ENCODE measurements at regions of chr19 and their contacts with region 1.

Region 1: GRCh38 chr19:47035127-47036096 is 13.0 kb downstream of the TMEM160 start:
- DNase-seq: no peak
- H3K4me3 ChIP-seq: peak overlapping the region; percentile 57
- CTCF ChIP-seq: peak; percentile 98

Region 2: GRCh38 chr19:47013041-47013517 is 22.3 kb before region 1 on chr19:
- CTCF ChIA-PET with region 1: interaction called, 31 read pairs
- POLR2A ChIA-PET with region 1: interaction called, 4 read pairs
- DNase-seq: no peak
- H3K4me3 ChIP-seq: no peak overlapping the region
- CTCF ChIP-seq: peak; percentile 97

Region 3: DNA sequence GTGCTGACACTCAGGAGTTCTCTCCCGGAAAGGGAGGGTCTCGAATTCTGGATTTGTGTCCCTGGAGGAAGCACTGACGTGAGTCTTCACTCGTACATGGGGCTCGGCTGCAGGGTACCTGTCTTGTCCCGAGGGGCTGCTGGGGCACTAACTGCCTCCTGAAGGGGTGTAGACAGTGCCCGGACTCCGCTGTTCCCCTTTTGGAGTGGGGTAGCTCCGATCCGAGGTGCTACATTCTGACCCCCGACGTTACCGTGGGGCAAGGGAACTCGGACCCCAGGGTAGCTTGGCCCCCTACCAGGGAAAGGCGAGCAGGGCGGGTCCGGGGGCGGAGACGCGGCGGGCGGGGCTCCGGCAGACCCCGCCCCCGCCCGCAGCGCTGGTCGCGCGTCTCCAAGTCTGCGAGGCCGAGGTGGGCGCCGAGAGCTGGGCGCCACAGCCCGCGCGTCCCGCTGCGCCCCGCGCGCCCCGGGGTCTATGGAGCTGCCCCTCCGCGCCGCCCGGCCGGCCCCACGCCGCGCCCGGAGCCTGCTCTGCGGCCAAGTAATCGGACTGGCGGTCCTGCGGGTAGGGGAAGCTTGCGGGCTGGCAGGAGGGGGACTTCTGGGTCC is 15.9 kb before region 1 on chr19 and contains the start of gene NPAS1:
- CTCF ChIA-PET with region 1: interaction called, 31 read pairs
- POLR2A ChIA-PET with region 1: no interaction called
- DNase-seq: no peak
- H3K4me3 ChIP-seq: peak within 1 kb of the TSS; percentile 52
- CTCF ChIP-seq: no peak

Region 4: DNA sequence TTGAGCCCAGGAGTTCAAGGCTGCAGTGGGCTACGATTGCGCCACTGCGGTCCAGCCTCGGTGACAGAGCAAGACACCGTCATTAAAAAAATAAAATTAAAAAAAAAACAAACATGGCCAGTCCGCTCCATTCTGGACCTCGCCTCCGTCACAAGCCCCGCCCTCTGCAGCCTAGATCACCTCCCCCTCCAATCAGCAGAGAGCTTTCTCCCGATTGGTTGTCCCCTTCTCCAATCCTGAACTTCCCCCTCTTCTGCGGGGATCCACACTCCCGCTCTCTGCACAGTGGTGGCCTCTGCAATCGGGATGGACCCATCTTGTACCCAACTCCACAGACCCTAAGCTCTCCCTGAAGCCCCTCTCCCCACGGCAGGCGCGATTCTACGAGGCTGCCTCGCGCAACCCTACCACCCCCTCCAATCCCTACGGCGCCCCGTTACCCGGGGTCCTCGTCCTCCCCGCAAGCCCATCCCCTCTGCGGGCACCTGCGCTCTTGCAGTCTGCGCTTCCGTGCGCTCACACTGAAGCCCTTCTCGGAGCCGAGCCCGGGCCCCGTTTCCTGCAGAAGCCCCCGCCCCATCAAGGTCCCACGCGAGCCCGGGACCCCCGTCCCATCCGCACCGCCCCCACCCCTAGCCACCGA is 12.5 kb after region 1 on chr19:
- CTCF ChIA-PET with region 1: interaction called, 23 read pairs
- POLR2A ChIA-PET with region 1: no interaction called
- DNase-seq: peak; percentile 57
- H3K4me3 ChIP-seq: peak overlapping the region; percentile 75
- CTCF ChIP-seq: no peak

Region 5: GRCh38 chr19:47112997-47113849 is 77.8 kb after region 1 on chr19 and contains the start of gene ZC3H4:
- CTCF ChIA-PET with region 1: interaction called, 17 read pairs
- POLR2A ChIA-PET with region 1: interaction called, 3 read pairs
- DNase-seq: peak; percentile 95
- H3K4me3 ChIP-seq: peak within 1 kb of the TSS; percentile 86
- CTCF ChIP-seq: no peak

Region 6: DNA sequence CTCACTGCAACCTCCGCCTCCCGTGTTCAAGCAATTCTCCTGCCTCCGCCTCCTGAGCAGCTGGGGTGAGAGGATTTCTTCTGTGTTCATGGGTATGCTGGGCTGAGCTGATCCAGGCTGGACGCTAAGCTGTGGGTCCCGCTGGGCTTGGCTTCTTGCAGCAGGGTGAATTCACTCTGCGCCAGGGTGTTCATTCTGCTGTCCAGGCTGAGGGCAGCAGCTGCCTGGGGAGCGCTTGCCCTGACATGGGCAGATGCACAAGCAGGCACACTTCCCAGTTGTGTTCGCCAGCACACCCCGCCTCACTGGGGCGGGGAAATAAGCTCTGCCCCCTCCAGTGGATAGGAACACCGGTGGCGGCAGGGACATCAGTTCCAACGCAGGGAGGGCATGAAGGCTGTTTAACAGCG is 231.9 kb after region 1 on chr19:
- CTCF ChIA-PET with region 1: no interaction called
- POLR2A ChIA-PET with region 1: no interaction called
- DNase-seq: no peak
- H3K4me3 ChIP-seq: no peak overlapping the region
- CTCF ChIP-seq: no peak

Measured in AG04449 (cell line).